ENCODE measurements at regions of chr17 and their contacts with region 1.

Region 1: GRCh38 chr17:46144246-46144645 is 49.0 kb downstream of the KANSL1 start:
- DNase-seq: no peak
- ATAC-seq: no peak
- H3K4me3 ChIP-seq: no peak overlapping the region
- H3K4me3 Mint-ChIP-seq: peak overlapping the region in 1 of 3 donors; percentile 53
- H3K27ac ChIP-seq: no peak overlapping the region
- H3K27ac Mint-ChIP-seq: no peak overlapping the region
- H3K4me1 ChIP-seq: peaks cover 40 to 60% of the 10 kb centered on the region in 2 experiments
- H3K4me1 Mint-ChIP-seq: peaks cover 92 to 98% (median 94%) of the 10 kb centered on the region in 3 donors
- H3K27me3 ChIP-seq: no peaks in the 10 kb centered on the region
- H3K27me3 Mint-ChIP-seq: no peaks in the 10 kb centered on the region

Region 2: DNA sequence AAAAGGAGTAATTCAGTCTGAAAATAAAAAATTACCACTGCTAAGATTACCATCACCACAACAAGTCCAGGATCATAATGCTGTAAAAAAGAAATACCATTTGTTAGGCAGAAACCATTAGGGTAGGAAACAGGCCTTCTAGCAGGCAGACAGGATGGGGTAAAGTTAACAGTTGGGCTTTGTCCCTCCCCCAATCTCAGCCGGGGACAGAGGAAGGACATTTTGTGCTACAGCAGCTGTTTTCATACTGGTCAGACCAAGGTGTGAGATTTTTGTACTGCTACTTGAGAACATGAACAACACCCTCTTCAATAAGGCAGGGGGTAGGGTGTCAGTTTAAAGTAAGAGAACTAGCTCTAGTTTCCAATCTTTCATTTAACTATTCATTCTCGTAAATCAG is 1705.6 kb before region 1 on chr17:
- CTCF ChIA-PET with region 1: no interaction called
- POLR2A ChIA-PET with region 1: interaction called in 1 of 2 experiments, 10 read pairs
- DNase-seq: peak in 18 of 35 experiments; percentile 3 to 52 (median 15)
- ATAC-seq: no peak
- H3K4me3 ChIP-seq: no peak overlapping the region
- H3K4me3 Mint-ChIP-seq: peak overlapping the region in 1 of 3 donors; percentile 14
- H3K27ac ChIP-seq: peak overlapping the region; percentile 42
- H3K27ac Mint-ChIP-seq: peak overlapping the region; percentile 21 to 56
- H3K4me1 ChIP-seq: peaks cover 2 to 8% of the 10 kb centered on the region in 2 experiments
- H3K4me1 Mint-ChIP-seq: peaks cover 15 to 28% (median 27%) of the 10 kb centered on the region in 3 donors
- H3K27me3 ChIP-seq: no peaks in the 10 kb centered on the region
- H3K27me3 Mint-ChIP-seq: no peaks in the 10 kb centered on the region

Region 3: GRCh38 chr17:46154151-46154816 is 10.0 kb after region 1 on chr17:
- CTCF ChIA-PET with region 1: interaction called, 3 to 10 read pairs
- POLR2A ChIA-PET with region 1: interaction called in 1 of 2 experiments, 5 read pairs
- DNase-seq: peak in 4 of 35 experiments; percentile 15 to 34 (median 20)
- ATAC-seq: peak; percentile 73 to 78 (median 76)
- H3K4me3 ChIP-seq: peak overlapping the region in 1 of 2 donors; percentile 29
- H3K4me3 Mint-ChIP-seq: peak overlapping the region; percentile 45 to 70 (median 51)
- H3K27ac ChIP-seq: peak overlapping the region; percentile 22
- H3K27ac Mint-ChIP-seq: peak overlapping the region; percentile 82 to 86
- H3K4me1 ChIP-seq: peaks cover 47 to 62% of the 10 kb centered on the region in 2 experiments
- H3K4me1 Mint-ChIP-seq: peaks cover 92 to 96% (median 94%) of the 10 kb centered on the region in 3 donors
- H3K27me3 ChIP-seq: no peaks in the 10 kb centered on the region
- H3K27me3 Mint-ChIP-seq: no peaks in the 10 kb centered on the region

Measured in T-cell (primary cell).